ENCODE measurements at regions of chr5 and their contacts with region 1.

Region 1: DNA sequence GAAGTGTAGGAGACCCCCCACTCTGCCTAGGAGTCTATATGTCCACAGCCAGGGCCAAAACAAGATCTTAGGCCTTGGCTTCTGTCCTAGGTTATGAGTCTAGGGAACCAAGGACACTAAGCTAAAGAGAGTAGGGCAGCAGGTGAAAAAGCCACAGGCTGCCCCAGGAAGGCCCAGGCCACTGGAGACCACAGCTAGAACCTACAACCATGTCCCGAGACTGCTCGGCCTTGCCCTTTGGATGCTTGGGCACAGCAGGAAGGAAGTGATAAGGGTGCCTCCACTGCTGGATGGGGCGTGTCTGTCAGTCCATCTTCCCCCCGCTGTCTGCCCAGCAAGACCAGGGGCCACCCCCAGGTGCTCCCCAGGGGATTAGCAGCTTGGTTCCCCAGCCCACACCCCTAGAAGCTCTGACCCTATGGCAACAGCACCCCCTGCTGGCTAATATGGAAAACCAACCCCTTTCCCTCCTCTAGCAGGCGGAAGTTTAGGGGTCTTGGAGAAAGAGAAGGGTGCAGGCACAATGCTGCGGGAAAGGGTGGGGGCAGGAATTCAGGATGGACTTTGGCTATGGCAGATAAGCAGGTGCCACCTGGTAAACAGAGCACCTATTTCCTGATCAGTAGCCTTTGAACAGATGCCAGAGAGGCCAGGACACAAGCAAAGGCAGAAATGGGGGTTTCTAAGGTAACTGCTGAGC is 10.5 kb upstream of the IRF1 start:
- DNase-seq: peak; percentile 57 to 87 (median 73)
- H3K4me3 ChIP-seq: no peak overlapping the region
- H3K4me3 Mint-ChIP-seq: no peak overlapping the region
- H3K27ac ChIP-seq: no peak overlapping the region
- H3K27ac Mint-ChIP-seq: peak overlapping the region; percentile 41 to 100 (median 80)
- H3K4me1 ChIP-seq: peaks cover 34% of the 10 kb centered on the region
- H3K4me1 Mint-ChIP-seq: peaks cover 35 to 47% (median 38%) of the 10 kb centered on the region in 3 donors
- H3K27me3 ChIP-seq: peaks cover 3% of the 10 kb centered on the region
- H3K27me3 Mint-ChIP-seq: peaks cover 0 to 2% of the 10 kb centered on the region in 2 donors

Region 2: GRCh38 chr5:132227485-132228240 is 273.4 kb before region 1 on chr5 and contains the start of gene P4HA2:
- CTCF ChIA-PET with region 1: no interaction called
- POLR2A ChIA-PET with region 1: no interaction called
- DNase-seq: peak in 1 of 5 donors; percentile 19
- H3K4me3 ChIP-seq: peak within 1 kb of the TSS; percentile 7
- H3K4me3 Mint-ChIP-seq: peak within 1 kb of the TSS; percentile 21 to 72 (median 67)
- H3K27ac ChIP-seq: peak within 1 kb of the TSS; percentile 53
- H3K27ac Mint-ChIP-seq: peak within 1 kb of the TSS in 1 of 8 donors; percentile 26
- H3K4me1 ChIP-seq: peaks cover 14% of the 10 kb centered on the region
- H3K4me1 Mint-ChIP-seq: peaks cover 3 to 17% (median 16%) of the 10 kb centered on the region in 3 donors
- H3K27me3 ChIP-seq: no peaks in the 10 kb centered on the region
- H3K27me3 Mint-ChIP-seq: peaks cover 15 to 37% of the 10 kb centered on the region in 2 donors
- total RNA-seq, gene P4HA2: 7.2 to 7.9 TPM

Region 3: DNA sequence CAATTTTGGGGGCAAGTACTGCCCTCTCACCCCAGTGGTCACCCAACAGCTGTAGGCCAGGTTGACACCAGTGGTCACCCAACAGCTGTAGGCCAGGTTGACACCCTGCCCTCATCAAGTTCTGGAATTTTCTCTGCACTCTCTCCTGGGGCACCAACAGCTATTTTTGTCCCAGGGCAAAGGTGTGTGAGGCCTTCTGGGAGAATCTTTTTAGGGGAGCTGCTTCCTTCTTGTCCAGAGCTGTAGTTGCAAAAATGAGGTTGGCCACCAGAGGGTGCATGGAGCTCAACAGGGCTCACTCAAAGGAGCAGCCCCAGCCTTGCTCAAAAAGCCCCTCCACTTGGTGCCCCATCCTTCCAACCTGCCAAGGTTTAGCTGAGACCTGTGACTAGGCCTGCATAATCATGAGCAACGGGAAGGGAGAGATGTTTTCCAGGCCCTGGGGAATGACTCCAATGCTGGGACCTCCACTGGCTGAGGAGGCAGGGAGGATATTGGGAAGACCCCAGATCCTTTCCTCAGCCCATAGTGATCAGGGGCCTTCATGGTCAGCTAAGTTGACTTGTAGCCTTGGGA is 262.8 kb before region 1 on chr5:
- CTCF ChIA-PET with region 1: interaction called, 11 read pairs
- POLR2A ChIA-PET with region 1: no interaction called
- DNase-seq: peak; percentile 36 to 72 (median 46)
- H3K4me3 ChIP-seq: no peak overlapping the region
- H3K4me3 Mint-ChIP-seq: no peak overlapping the region
- H3K27ac ChIP-seq: no peak overlapping the region
- H3K27ac Mint-ChIP-seq: no peak overlapping the region
- H3K4me1 ChIP-seq: no peaks in the 10 kb centered on the region
- H3K4me1 Mint-ChIP-seq: no peaks in the 10 kb centered on the region
- H3K27me3 ChIP-seq: no peaks in the 10 kb centered on the region
- H3K27me3 Mint-ChIP-seq: peaks cover 0 to 11% of the 10 kb centered on the region in 2 donors

Region 4: DNA sequence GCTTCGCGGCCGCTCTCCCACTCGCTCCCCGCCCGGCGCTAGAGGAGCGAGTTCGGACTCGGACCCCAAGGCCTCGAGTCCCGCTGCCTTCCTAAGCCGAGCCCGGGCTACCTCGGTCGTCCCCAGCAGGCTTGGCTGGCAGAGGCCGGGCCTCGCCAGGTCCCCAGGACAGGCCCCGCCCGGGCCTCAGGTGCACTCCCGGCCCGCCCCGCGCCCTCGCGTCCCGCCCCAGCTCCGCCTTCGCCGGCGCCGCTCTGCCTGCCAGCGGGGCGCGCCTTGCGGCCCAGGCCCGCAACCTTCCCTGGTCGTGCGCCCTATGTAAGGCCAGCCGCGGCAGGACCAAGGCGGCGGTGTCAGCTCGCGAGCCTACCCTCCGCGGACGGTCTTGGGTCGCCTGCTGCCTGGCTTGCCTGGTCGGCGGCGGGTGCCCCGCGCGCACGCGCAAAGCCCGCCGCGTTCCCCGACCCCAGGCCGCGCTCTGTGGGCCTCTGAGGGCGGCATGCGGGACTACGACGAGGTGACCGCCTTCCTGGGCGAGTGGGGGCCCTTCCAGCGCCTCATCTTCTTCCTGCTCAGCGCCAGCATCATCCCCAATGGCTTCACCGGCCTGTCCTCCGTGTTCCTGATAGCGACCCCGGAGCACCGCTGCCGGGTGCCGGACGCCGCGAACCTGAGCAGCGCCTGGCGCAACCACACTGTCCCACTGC is 131.5 kb before region 1 on chr5 and contains the start of gene SLC22A5:
- CTCF ChIA-PET with region 1: interaction called, 16 read pairs
- POLR2A ChIA-PET with region 1: interaction called, 12 read pairs
- DNase-seq: peak; percentile 56 to 81 (median 70)
- H3K4me3 ChIP-seq: peak within 1 kb of the TSS; percentile 74
- H3K4me3 Mint-ChIP-seq: peak within 1 kb of the TSS; percentile 67 to 92 (median 83)
- H3K27ac ChIP-seq: peak within 1 kb of the TSS; percentile 69
- H3K27ac Mint-ChIP-seq: peak within 1 kb of the TSS in 7 of 8 donors; percentile 4 to 95 (median 70)
- H3K4me1 ChIP-seq: peaks cover 27% of the 10 kb centered on the region
- H3K4me1 Mint-ChIP-seq: peaks cover 17 to 30% (median 29%) of the 10 kb centered on the region in 3 donors
- H3K27me3 ChIP-seq: no peaks in the 10 kb centered on the region
- H3K27me3 Mint-ChIP-seq: no peaks in the 10 kb centered on the region
- total RNA-seq, gene SLC22A5: 5.2 to 5.9 TPM

Region 5: GRCh38 chr5:132426525-132427138 is 74.4 kb before region 1 on chr5:
- CTCF ChIA-PET with region 1: interaction called, 22 read pairs
- POLR2A ChIA-PET with region 1: interaction called, 18 read pairs
- DNase-seq: peak; percentile 37 to 83 (median 52)
- H3K4me3 ChIP-seq: peak overlapping the region; percentile 57
- H3K4me3 Mint-ChIP-seq: peak overlapping the region; percentile 61 to 89 (median 79)
- H3K27ac ChIP-seq: peak overlapping the region; percentile 84
- H3K27ac Mint-ChIP-seq: peak overlapping the region; percentile 95 to 99 (median 98)
- H3K4me1 ChIP-seq: peaks cover 100% of the 10 kb centered on the region
- H3K4me1 Mint-ChIP-seq: peaks cover 96 to 98% (median 97%) of the 10 kb centered on the region in 3 donors
- H3K27me3 ChIP-seq: no peaks in the 10 kb centered on the region
- H3K27me3 Mint-ChIP-seq: no peaks in the 10 kb centered on the region

Region 6: GRCh38 chr5:132456296-132457001 is 44.6 kb before region 1 on chr5:
- CTCF ChIA-PET with region 1: interaction called, 13 read pairs
- POLR2A ChIA-PET with region 1: interaction called, 33 read pairs
- DNase-seq: peak; percentile 55 to 85 (median 78)
- H3K4me3 ChIP-seq: peak overlapping the region; percentile 47
- H3K4me3 Mint-ChIP-seq: peak overlapping the region; percentile 37 to 86 (median 81)
- H3K27ac ChIP-seq: peak overlapping the region; percentile 93
- H3K27ac Mint-ChIP-seq: peak overlapping the region; percentile 98 to 100 (median 100)
- H3K4me1 ChIP-seq: peaks cover 94% of the 10 kb centered on the region
- H3K4me1 Mint-ChIP-seq: peaks cover 92 to 97% (median 95%) of the 10 kb centered on the region in 3 donors
- H3K27me3 ChIP-seq: no peaks in the 10 kb centered on the region
- H3K27me3 Mint-ChIP-seq: peaks cover 0 to 2% of the 10 kb centered on the region in 2 donors

Region 7: DNA sequence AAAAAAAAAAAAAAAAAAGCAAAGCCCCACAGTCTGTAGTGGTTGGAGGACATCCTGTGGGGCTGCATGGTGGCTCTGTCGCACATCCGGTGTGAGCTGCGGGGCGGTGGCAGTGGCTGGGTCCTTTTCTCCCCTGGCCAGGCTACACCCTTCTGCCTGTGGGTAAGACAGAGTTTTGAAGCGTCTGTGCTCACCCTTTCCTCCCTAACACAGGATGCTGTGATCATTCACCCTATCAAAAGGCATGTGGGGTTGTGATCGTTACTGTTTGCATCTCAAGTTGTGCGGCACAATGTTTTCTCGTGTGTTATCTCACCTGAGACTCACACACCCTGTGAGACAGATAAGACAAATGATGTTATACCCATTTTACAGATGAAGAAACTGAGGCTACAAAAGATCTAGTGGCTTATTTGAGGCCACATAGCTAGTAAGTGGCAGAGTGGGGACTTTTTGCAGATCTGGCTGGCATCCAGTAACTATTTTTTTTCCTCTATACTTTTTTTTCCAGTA is 28.0 kb before region 1 on chr5:
- CTCF ChIA-PET with region 1: interaction called, 222 read pairs
- POLR2A ChIA-PET with region 1: interaction called, 28 read pairs
- DNase-seq: peak; percentile 81 to 96 (median 89)
- H3K4me3 ChIP-seq: no peak overlapping the region
- H3K4me3 Mint-ChIP-seq: peak overlapping the region; percentile 39 to 86 (median 64)
- H3K27ac ChIP-seq: peak overlapping the region; percentile 62
- H3K27ac Mint-ChIP-seq: peak overlapping the region; percentile 93 to 99 (median 96)
- H3K4me1 ChIP-seq: peaks cover 86% of the 10 kb centered on the region
- H3K4me1 Mint-ChIP-seq: peaks cover 87 to 99% (median 97%) of the 10 kb centered on the region in 3 donors
- H3K27me3 ChIP-seq: no peaks in the 10 kb centered on the region
- H3K27me3 Mint-ChIP-seq: peaks cover 0 to 9% of the 10 kb centered on the region in 2 donors